ENCODE measurements at regions of chr5 and their contacts with region 1.

Region 1: GRCh38 chr5:173615884-173616576 is 420 bp downstream of the BOD1 start:
- DNase-seq: peak; percentile 40 to 84 (median 67)
- ATAC-seq: peak; percentile 67 to 70 (median 68)
- H3K4me3 ChIP-seq: peak overlapping the region; percentile 76 to 87
- H3K4me3 Mint-ChIP-seq: peak overlapping the region; percentile 80 to 91 (median 88)
- H3K27ac ChIP-seq: peak overlapping the region; percentile 76
- H3K27ac Mint-ChIP-seq: peak overlapping the region; percentile 91 to 96
- H3K4me1 ChIP-seq: peaks cover 18 to 21% of the 10 kb centered on the region in 2 experiments
- H3K4me1 Mint-ChIP-seq: peaks cover 48 to 56% (median 53%) of the 10 kb centered on the region in 3 donors
- H3K27me3 ChIP-seq: no peaks in the 10 kb centered on the region
- H3K27me3 Mint-ChIP-seq: no peaks in the 10 kb centered on the region

Region 2: GRCh38 chr5:173035904-173036707 is 579.9 kb before region 1 on chr5:
- CTCF ChIA-PET with region 1: no interaction called
- POLR2A ChIA-PET with region 1: no interaction called
- DNase-seq: peak in 1 of 35 experiments; percentile 32
- ATAC-seq: peak in 1 of 4 experiments; percentile 29
- H3K4me3 ChIP-seq: peak overlapping the region in 1 of 2 donors; percentile 34
- H3K4me3 Mint-ChIP-seq: peak overlapping the region; percentile 63 to 77 (median 76)
- H3K27ac ChIP-seq: peak overlapping the region; percentile 84
- H3K27ac Mint-ChIP-seq: peak overlapping the region; percentile 96 to 99
- H3K4me1 ChIP-seq: peaks cover 15 to 37% of the 10 kb centered on the region in 2 experiments
- H3K4me1 Mint-ChIP-seq: peaks cover 60 to 70% (median 61%) of the 10 kb centered on the region in 3 donors
- H3K27me3 ChIP-seq: no peaks in the 10 kb centered on the region
- H3K27me3 Mint-ChIP-seq: no peaks in the 10 kb centered on the region

Region 3: GRCh38 chr5:173530547-173530946 is 85.5 kb before region 1 on chr5:
- CTCF ChIA-PET with region 1: no interaction called
- POLR2A ChIA-PET with region 1: no interaction called
- DNase-seq: no peak
- ATAC-seq: no peak
- H3K4me3 ChIP-seq: no peak overlapping the region
- H3K4me3 Mint-ChIP-seq: no peak overlapping the region
- H3K27ac ChIP-seq: no peak overlapping the region
- H3K27ac Mint-ChIP-seq: no peak overlapping the region
- H3K4me1 ChIP-seq: no peaks in the 10 kb centered on the region
- H3K4me1 Mint-ChIP-seq: no peaks in the 10 kb centered on the region
- H3K27me3 ChIP-seq: peaks cover 2 to 5% of the 10 kb centered on the region in 2 experiments
- H3K27me3 Mint-ChIP-seq: peaks cover 6 to 15% of the 10 kb centered on the region in 2 donors

Region 4: DNA sequence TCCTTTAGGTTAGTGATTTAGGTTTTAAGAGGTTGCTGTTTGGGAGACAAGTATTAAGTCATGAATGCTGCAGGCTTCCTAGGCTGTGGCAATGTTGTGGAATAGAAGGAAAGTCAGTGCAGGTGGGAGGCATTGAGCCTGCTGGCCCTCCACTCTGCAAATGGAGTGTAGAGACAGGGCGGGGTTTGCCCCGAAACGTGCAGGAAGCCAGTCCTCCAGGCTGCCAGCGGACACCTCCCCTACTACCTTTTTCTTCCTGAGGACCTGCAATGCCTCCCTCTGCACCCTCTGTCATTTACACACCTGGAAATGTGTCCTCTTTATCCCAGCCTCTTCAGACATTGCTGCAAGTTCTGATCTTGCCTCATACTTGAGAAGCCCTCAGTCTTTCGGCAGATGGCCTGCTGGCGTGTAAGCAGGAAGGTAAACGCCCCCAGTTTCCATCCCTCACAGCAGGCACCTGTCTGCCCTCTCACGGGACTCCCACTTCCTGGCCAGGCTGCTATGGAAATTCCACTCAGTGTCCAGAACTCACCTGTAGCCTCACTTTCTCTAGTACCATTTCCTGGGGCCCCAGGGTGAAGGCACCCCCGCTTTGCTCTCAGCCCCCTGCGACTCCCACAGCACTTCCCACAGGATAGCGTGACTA is 82.0 kb after region 1 on chr5:
- CTCF ChIA-PET with region 1: no interaction called
- POLR2A ChIA-PET with region 1: no interaction called
- DNase-seq: no peak
- ATAC-seq: no peak
- H3K4me3 ChIP-seq: no peak overlapping the region
- H3K4me3 Mint-ChIP-seq: no peak overlapping the region
- H3K27ac ChIP-seq: no peak overlapping the region
- H3K27ac Mint-ChIP-seq: no peak overlapping the region
- H3K4me1 ChIP-seq: peaks cover 8 to 12% of the 10 kb centered on the region in 2 experiments
- H3K4me1 Mint-ChIP-seq: peaks cover 5 to 12% (median 7%) of the 10 kb centered on the region in 3 donors
- H3K27me3 ChIP-seq: peaks cover 0 to 2% of the 10 kb centered on the region in 2 experiments
- H3K27me3 Mint-ChIP-seq: no peaks in the 10 kb centered on the region

Region 5: DNA sequence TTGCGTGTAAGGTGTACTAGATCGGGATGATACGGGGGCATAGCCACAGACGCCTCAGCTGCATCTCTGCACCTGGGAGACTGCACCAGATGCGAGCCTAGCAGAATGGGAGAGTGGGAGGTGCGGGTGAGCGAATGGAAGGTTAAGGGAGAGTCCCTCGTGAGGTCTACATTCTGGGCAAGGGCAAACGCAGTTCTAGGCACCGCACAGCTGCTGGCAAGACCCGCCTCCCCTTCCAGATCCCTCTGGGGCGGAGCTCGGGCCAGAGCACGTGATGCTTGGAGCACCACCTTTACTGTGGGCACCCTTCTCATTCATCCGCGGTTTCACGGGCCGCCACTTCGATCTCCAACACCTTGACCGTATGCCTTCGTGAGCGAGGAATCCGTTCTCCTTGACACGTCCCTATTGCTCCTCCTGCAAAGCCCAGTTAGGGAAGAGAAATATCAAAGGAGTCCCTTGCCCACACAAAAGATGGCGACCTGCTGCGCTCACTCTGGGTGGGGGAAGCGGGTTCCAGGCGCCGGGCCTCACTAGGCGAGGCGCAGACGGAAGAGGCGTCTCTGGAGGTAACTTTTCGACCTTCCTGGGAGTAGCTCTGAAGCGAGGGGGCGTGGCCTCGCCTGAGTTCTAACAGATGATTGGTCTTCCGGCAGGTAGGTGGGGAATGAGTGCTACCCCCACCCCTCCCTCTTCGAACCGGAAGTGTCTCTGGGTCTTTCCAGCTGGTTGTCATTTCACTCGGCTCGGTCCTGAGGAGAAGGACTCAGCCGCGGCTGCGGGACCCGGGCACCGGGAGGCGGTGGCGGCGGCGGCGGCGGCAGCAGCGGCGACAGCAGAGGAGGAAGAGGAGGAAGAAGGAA is 271.8 kb after region 1 on chr5 and contains the start of gene CPEB4:
- CTCF ChIA-PET with region 1: interaction called, 3 to 38 read pairs
- POLR2A ChIA-PET with region 1: interaction called in 1 of 2 experiments, 15 read pairs
- DNase-seq: peak; percentile 88 to 99 (median 96)
- ATAC-seq: peak; percentile 93 to 98 (median 97)
- H3K4me3 ChIP-seq: peak within 1 kb of the TSS; percentile 81 to 90
- H3K4me3 Mint-ChIP-seq: peak within 1 kb of the TSS; percentile 87 to 99 (median 98)
- H3K27ac ChIP-seq: peak within 1 kb of the TSS; percentile 93
- H3K27ac Mint-ChIP-seq: peak within 1 kb of the TSS; percentile 99 to 100
- H3K4me1 ChIP-seq: peaks cover 29 to 47% of the 10 kb centered on the region in 2 experiments
- H3K4me1 Mint-ChIP-seq: peaks cover 76 to 85% (median 76%) of the 10 kb centered on the region in 3 donors
- H3K27me3 ChIP-seq: no peaks in the 10 kb centered on the region
- H3K27me3 Mint-ChIP-seq: no peaks in the 10 kb centered on the region
- total RNA-seq, gene CPEB4: 13.8 to 25.9 (median 14.9) TPM

Region 6: DNA sequence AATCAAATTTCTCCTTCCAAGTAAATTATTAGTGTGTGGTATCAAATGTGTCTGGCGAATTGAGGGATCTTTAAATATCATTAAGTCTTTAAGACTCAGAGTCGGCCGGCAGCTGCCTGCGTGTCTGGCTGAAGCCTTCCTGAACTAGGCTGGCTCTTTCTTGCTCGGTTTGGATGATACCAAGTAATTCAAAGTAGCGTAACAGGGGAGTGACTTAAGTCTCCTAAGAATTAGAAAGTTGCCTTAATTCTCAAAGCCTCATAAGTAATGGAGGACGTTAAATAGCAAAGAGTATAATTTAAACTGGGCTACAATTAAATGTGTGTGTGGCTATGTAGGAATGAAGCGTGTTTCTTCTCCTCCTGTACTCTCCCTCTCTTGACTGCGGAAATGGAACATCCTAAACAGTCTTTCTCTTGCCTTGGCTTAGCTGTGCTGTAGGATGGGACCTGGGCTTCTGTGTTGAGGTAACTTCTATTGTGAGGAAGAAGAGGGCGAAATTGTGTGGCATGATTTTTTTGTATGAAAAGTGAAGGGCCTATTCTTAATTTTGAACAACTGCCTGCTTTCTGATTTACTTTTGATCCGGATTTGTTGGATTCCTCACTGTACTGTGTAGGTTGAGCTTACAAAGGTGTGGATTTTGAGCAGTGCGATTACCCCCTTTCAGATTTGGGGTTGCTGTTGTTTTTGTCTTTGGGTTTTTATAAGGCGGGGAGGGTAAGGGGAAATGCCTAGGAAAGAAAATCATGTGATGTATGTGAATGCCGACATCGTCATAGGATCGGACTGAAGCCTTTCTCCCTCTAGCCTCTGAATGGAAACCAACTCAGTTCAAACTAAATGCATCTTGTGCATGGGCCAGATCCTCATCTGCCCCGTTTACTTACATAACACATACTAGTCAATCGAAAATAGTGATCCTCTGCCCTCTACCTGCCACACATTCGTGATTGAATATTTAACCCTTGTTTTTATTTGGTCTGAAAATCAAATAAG is 302.1 kb after region 1 on chr5:
- CTCF ChIA-PET with region 1: interaction called, 5 to 62 read pairs
- POLR2A ChIA-PET with region 1: no interaction called
- DNase-seq: peak; percentile 24 to 84 (median 45)
- ATAC-seq: peak; percentile 91 to 96 (median 94)
- H3K4me3 ChIP-seq: peak overlapping the region; percentile 61 to 67
- H3K4me3 Mint-ChIP-seq: no peak overlapping the region
- H3K27ac ChIP-seq: peak overlapping the region; percentile 87
- H3K27ac Mint-ChIP-seq: no peak overlapping the region
- H3K4me1 ChIP-seq: peaks cover 4 to 5% of the 10 kb centered on the region in 2 experiments
- H3K4me1 Mint-ChIP-seq: peaks cover 10 to 21% (median 12%) of the 10 kb centered on the region in 3 donors
- H3K27me3 ChIP-seq: no peaks in the 10 kb centered on the region
- H3K27me3 Mint-ChIP-seq: no peaks in the 10 kb centered on the region

Region 7: GRCh38 chr5:173967241-173967640 is 351.2 kb after region 1 on chr5:
- CTCF ChIA-PET with region 1: interaction called, 24 to 70 read pairs
- POLR2A ChIA-PET with region 1: no interaction called
- DNase-seq: no peak
- ATAC-seq: no peak
- H3K4me3 ChIP-seq: no peak overlapping the region
- H3K4me3 Mint-ChIP-seq: no peak overlapping the region
- H3K27ac ChIP-seq: no peak overlapping the region
- H3K27ac Mint-ChIP-seq: no peak overlapping the region
- H3K4me1 ChIP-seq: peaks cover 3 to 15% of the 10 kb centered on the region in 2 experiments
- H3K4me1 Mint-ChIP-seq: peaks cover 24 to 30% (median 28%) of the 10 kb centered on the region in 3 donors
- H3K27me3 ChIP-seq: peaks cover 0 to 8% of the 10 kb centered on the region in 2 experiments
- H3K27me3 Mint-ChIP-seq: peaks cover 8 to 9% of the 10 kb centered on the region in 2 donors